Transverse colon (tissue), 4 donors: ENCODE measurements at regions of chr10 and their contacts with region 1.

Region 1: GRCh38 chr10:707861-708260 is 18.4 kb upstream of the DIP2C start:
- DNase-seq: no peak
- H3K4me3 ChIP-seq: no peak overlapping the region
- H3K27ac ChIP-seq: no peak overlapping the region
- H3K4me1 ChIP-seq: no peaks in the 10 kb centered on the region
- H3K27me3 ChIP-seq: peaks cover 3% of the 10 kb centered on the region
- CTCF ChIP-seq: no peak
- EP300 ChIP-seq: no peak
- POLR2A ChIP-seq: no peak

Region 2: GRCh38 chr10:615583-616152 is 92.2 kb before region 1 on chr10:
- in situ Hi-C with region 1: no loop called
- intact Hi-C with region 1: no loop called
- DNase-seq: no peak
- H3K4me3 ChIP-seq: no peak overlapping the region
- H3K27ac ChIP-seq: peak overlapping the region in 2 of 4 donors; percentile 17 to 72
- H3K4me1 ChIP-seq: peaks cover 18 to 54% (median 35%) of the 10 kb centered on the region in 4 donors
- H3K27me3 ChIP-seq: no peaks in the 10 kb centered on the region
- CTCF ChIP-seq: no peak
- EP300 ChIP-seq: no peak
- POLR2A ChIP-seq: no peak

Region 3: GRCh38 chr10:775245-776075 is 67.6 kb after region 1 on chr10:
- in situ Hi-C with region 1: no loop called
- intact Hi-C with region 1: loop called (anchors 10 kb)
- DNase-seq: no peak
- H3K4me3 ChIP-seq: no peak overlapping the region
- H3K27ac ChIP-seq: no peak overlapping the region
- H3K4me1 ChIP-seq: no peaks in the 10 kb centered on the region
- H3K27me3 ChIP-seq: no peaks in the 10 kb centered on the region
- CTCF ChIP-seq: no peak
- EP300 ChIP-seq: no peak
- POLR2A ChIP-seq: no peak